Posterior vena cava (tissue), 2 donors: ENCODE measurements at regions of chr9 and their contacts with region 1.

Region 1: GRCh38 chr9:100575765-100576386 is 2.0 kb upstream of the CAVIN4 start:
- DNase-seq: no peak

Region 2: DNA sequence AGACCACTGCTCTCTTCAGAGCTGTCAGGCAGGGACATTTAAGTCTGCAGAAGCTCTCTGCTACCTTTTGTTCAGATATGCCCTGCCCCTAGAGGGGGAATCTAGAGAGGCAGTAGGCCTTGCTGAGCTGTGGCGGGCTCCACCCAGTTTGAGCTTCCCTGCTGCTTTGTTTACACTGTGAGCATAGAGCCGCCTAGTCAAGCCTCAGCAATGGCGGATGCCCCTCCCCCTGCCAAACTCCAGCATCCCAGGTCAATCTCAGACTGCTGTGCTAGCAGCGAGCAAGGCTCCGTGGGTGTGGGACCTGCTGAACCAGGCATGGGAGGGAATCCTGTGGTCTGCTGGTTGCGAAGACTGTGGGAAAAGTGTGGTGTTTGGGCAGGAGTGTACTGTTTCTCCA is 61.9 kb after region 1 on chr9:
- intact Hi-C with region 1: loop called in 1 of 2 experiments (anchors 2 kb)
- DNase-seq: no peak